Psoas muscle (tissue), 8 donors: ENCODE measurements at regions of chr13 and their contacts with region 1.

Region 1: GRCh38 chr13:106917673-106918556 is 350.0 kb upstream of the ARGLU1 start:
- DNase-seq: peak; percentile 65 to 78
- ATAC-seq: peak; percentile 65 to 90 (median 80)
- H3K4me3 ChIP-seq: peak overlapping the region; percentile 67
- H3K27ac ChIP-seq: peak overlapping the region; percentile 81
- H3K4me1 ChIP-seq: no peaks in the 10 kb centered on the region
- H3K27me3 ChIP-seq: peaks cover 0 to 3% (median 0%) of the 10 kb centered on the region in 3 donors
- CTCF ChIP-seq: peak; percentile 79

Region 2: DNA sequence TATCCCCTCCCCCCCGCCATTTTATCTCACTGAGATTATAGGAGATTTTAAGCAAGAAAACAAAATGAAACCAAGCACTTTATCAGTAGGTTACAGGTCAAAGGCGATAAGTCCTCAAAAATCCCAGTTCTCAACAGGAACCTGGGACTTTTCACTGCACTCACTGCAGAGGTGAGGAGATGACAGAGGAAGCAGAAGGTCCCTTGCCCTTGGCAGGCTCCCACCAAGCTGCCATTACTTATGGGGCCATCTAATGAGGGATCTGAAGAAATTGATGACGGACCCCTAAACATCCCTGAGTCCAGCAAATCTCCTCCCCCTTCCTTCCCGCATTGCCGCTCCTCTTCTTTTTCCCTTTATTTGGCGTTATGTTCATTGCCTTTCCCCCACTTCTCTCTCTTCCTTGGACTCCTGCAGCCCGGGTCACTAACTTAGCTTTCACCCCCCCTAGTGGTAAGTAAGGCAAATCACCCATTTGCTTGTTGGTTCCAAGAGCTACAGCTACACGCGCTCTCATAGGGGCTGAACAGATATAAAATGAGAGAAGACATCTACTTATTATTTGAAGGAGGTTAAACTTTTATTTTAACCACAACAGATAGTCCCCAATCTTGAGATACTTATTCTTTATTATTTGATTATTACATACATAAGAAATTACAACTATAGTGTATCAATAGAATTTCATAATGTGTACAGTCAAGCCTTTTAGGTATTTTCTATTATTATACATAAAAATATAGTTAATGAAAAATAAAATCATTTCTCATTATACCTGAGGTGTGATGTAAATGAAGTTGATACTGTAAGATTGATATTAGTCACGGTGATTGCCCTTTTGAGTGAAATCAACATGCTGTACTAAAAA is 298.0 kb before region 1 on chr13:
- intact Hi-C with region 1: loop called in 1 of 2 experiments (anchors 10 kb)
- DNase-seq: no peak
- ATAC-seq: peak; percentile 68 to 90 (median 82)
- H3K4me3 ChIP-seq: peak overlapping the region; percentile 30
- H3K27ac ChIP-seq: no peak overlapping the region
- H3K4me1 ChIP-seq: no peaks in the 10 kb centered on the region
- H3K27me3 ChIP-seq: peaks cover 0 to 13% (median 4%) of the 10 kb centered on the region in 3 donors
- CTCF ChIP-seq: peak; percentile 69

Region 3: GRCh38 chr13:106701771-106702341 is 216.1 kb before region 1 on chr13:
- intact Hi-C with region 1: loop called in 1 of 2 experiments (anchors 1 kb)
- DNase-seq: peak; percentile 16 to 48
- ATAC-seq: peak; percentile 21 to 56 (median 48)
- H3K4me3 ChIP-seq: no peak overlapping the region
- H3K27ac ChIP-seq: no peak overlapping the region
- H3K4me1 ChIP-seq: no peaks in the 10 kb centered on the region
- H3K27me3 ChIP-seq: no peaks in the 10 kb centered on the region
- CTCF ChIP-seq: no peak

Region 4: GRCh38 chr13:107124129-107124718 is 206.3 kb after region 1 on chr13:
- intact Hi-C with region 1: loop called in 1 of 2 experiments (anchors 5 kb)
- DNase-seq: no peak
- ATAC-seq: no peak
- H3K4me3 ChIP-seq: no peak overlapping the region
- H3K27ac ChIP-seq: no peak overlapping the region
- H3K4me1 ChIP-seq: no peaks in the 10 kb centered on the region
- H3K27me3 ChIP-seq: peaks cover 0 to 2% (median 2%) of the 10 kb centered on the region in 3 donors
- CTCF ChIP-seq: peak; percentile 49